ENCODE measurements at regions of chr7 and their contacts with region 1.

Region 1: DNA sequence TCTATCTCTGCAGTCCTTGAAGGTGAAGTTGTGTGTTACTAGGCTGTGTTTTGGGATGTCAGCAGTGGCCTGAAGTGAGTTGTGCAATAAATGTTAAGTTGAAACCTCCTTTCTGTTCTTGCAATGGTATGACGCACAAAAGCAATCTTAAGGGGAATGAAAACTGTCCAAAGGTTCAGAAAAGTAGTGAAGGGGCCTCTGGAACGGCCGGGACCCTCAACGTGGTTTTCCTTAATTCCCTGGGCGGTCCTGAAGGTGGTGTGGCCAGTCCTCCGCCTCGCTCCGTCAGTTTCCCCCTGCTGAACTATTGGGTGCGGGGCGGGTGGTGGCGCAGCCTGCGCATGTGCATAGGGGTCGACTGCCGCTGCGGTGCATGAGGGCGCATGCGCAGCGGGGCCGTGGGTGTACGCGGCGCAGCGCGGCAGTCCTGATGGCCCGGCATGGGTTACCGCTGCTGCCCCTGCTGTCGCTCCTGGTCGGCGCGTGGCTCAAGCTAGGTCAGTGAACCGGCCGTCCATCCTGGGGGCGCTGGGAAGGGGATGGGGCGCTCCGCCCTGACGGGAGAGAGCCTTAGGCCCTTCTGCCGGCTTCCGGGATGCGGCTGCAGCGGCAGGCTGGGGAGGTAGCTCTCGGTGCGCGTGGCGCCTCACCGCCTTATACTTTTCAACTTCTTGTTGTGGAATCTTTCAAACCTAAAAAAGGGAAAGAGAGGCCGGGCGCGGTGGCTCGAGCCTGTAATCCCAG is at the start of gene SUMF2:
- DNase-seq: peak; percentile 89 to 93
- H3K4me3 ChIP-seq: peak within 1 kb of the TSS; percentile 76 to 86 (median 84)
- H3K27ac ChIP-seq: peak within 1 kb of the TSS; percentile 81
- H3K4me1 ChIP-seq: peaks cover 0 to 6% (median 0%) of the 10 kb centered on the region in 4 experiments; a peak in 1 of 7 replicates
- H3K27me3 ChIP-seq: no peaks in the 10 kb centered on the region
- CTCF ChIP-seq: peak in 1 of 3 experiments; percentile 12; a peak in 1 of 4 replicates
- EP300 ChIP-seq: no peak
- POLR2A ChIP-seq: peak; percentile 85 to 90
- RAD21 ChIP-seq: no peak
- total RNA-seq, gene SUMF2: 59.2 and 61.9 TPM in 2 replicates

Region 2: DNA sequence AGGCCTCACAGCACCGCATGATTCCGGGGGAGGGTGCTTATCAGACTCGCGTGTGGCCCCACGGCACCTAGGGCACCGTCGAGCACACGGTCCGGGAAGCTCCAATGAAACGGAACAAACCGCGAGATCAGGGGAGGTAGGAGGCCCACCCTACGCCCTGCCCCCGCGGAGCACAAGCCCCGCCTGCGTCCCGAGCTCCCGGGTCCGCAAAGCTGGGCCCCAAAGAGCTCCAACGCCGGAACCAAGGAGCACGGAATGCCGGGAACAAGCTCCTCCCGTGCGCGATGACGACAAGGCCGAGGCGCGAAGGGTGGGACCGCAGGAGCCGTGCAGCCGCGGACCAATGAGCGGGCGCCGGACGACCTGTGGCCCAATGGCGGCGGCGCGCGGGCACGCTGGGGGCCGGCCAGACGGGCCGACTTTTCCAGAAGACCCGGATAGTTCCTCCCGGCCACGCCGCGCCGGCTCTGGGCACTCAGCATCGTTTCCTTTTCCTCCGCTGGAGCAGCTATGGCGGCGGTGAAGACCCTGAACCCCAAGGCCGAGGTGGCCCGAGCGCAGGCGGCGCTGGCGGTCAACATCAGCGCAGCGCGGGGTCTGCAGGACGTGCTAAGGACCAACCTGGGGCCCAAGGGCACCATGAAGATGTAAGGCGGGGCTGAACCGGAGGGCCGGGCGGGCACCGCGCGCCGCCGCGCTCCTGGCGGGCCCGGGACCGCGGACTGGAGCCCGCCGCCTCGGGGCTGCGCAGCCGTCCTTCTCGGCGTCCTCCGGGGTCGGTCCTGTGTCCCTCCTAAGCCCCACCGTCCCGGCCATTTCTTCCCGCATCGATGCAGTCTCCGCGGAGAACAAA is 12.5 kb before region 1 on chr7 and contains the starts of genes CCT6A and PSPH:
- CTCF ChIA-PET with region 1: interaction called, 4 read pairs
- POLR2A ChIA-PET with region 1: interaction called, 77 read pairs
- DNase-seq: peak; percentile 95 to 96
- H3K4me3 ChIP-seq: peak within 1 kb of the TSS; percentile 74 to 100 (median 92)
- H3K27ac ChIP-seq: peak within 1 kb of the TSS; percentile 96
- H3K4me1 ChIP-seq: peaks cover 0 to 11% (median 1%) of the 10 kb centered on the region in 4 experiments; a peak in 6 of 7 replicates
- H3K27me3 ChIP-seq: no peaks in the 10 kb centered on the region
- CTCF ChIP-seq: no peak
- EP300 ChIP-seq: 0 out of 3 replicates have a peak, but pooled peaks of 1 of the 2 experiments have one; percentile 11
- POLR2A ChIP-seq: peak; percentile 85 to 99
- RAD21 ChIP-seq: no peak
- total RNA-seq, gene CCT6A: 260 and 272 TPM in 2 replicates
- total RNA-seq, gene PSPH: 56.3 and 64.8 TPM in 2 replicates

Region 3: DNA sequence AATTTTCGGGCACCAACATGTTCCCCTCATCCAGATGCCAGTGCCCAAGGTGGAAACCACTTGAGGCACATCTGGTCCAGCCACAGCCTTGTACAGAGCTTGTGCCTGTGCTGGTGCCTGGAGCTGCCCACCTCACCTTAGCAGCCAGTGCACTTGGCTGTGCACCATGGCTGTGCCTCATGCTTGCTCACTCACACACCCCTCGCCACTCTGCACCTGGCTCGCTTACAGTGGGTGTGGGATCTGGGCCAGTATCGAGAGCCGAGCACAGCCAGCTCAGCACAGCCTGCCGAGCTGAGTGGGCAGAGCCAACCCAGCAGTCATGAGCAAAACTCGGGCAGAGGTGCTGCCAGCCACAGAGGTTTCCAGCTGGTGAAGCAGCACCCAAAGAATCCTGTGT is 192.1 kb after region 1 on chr7:
- CTCF ChIA-PET with region 1: no interaction called
- POLR2A ChIA-PET with region 1: no interaction called
- DNase-seq: no peak
- H3K4me3 ChIP-seq: no peak overlapping the region
- H3K27ac ChIP-seq: no peak overlapping the region
- H3K4me1 ChIP-seq: no peaks in the 10 kb centered on the region
- H3K27me3 ChIP-seq: no peaks in the 10 kb centered on the region
- CTCF ChIP-seq: no peak
- EP300 ChIP-seq: no peak
- POLR2A ChIP-seq: no peak
- RAD21 ChIP-seq: no peak